Heart left ventricle (tissue), 16 donors: ENCODE measurements at regions of chr12 and their contacts with region 1.

Region 1: DNA sequence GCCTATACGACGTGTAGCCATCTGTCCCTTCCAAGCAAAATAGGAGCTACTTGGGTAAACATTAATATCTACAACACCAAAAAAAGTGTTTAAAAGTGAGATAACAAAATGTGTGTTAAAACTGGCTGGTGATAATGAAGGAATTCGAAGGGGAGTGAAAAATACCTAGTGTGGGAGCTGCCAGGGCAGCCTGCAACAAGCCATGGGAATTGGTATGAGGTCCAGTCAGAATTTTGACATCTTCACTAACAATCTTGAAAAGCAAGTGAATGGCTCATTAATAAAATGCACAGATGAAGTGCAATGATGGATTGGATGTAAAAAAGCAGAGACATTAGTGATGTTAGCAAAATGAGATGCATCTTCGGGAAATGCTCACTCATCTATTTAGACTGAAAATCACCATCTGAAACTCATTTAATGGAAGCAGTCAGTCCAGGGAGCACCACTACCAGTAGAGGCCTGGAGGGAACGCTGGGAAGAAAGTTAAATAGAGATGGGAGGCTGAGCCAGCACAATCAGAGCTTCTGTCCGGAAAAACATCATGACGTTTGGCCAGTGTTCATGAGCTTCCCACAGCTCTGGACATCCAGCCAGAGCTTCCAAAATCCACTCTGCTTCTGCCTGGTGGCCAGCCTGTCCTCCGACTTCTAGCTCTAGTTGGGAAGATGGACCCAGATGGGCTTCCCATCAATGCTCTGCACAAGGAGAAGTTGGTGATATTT is 405.0 kb upstream of the TMTC1 start:
- DNase-seq: peak in 2 of 5 donors; percentile 42 to 43
- ATAC-seq: peak; percentile 55 to 84 (median 76)
- H3K4me3 ChIP-seq: no peak overlapping the region
- H3K27ac ChIP-seq: peak overlapping the region in 4 of 12 donors; percentile 1 to 27 (median 10)
- H3K4me1 ChIP-seq: peaks cover 0 to 6% (median 0%) of the 10 kb centered on the region in 12 donors
- H3K27me3 ChIP-seq: peaks cover 0 to 4% (median 0%) of the 10 kb centered on the region in 9 donors
- CTCF ChIP-seq: no peak
- POLR2A ChIP-seq: no peak

Region 2: DNA sequence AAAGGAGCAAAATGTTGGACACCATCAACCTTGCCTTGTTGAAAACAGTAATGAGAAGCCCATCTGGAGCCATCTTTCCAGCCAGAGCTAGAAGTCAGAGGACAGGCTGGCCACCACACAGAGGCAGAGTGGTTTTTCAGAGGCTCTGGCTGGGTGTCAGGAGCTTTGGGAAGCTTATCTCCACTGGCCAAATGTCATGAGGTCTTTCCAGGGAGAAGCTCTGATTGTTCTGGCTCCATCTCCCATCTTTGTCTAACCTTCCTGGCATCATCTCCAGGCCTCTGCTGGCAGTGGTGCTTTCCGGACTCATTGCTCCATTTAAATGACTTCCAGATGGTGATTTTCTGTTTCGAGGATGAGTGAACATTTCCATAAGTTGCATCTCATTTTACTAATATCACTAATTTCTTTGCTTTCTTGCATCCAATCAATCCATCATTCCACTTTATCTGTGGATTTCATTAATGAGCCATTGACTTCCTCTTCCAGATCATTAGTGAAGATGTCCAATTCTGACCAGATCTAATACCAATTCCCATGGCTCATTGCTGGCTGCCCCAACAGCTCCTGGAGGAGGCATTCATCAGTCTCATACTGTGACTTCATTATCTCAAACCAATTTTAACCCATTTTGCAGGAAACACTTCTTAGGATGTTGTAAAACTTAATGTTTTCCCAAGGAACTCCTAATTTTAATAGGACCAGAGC is 369.7 kb before region 1 on chr12:
- intact Hi-C with region 1: loop called in 1 of 10 experiments (anchors 10 kb)
- DNase-seq: peak in 4 of 5 donors; percentile 36 to 69 (median 58)
- ATAC-seq: peak; percentile 69 to 89 (median 80)
- H3K4me3 ChIP-seq: no peak overlapping the region
- H3K27ac ChIP-seq: no peak overlapping the region
- H3K4me1 ChIP-seq: peaks cover 0 to 12% (median 1%) of the 10 kb centered on the region in 12 donors
- H3K27me3 ChIP-seq: no peaks in the 10 kb centered on the region
- CTCF ChIP-seq: no peak
- POLR2A ChIP-seq: no peak

Region 3: DNA sequence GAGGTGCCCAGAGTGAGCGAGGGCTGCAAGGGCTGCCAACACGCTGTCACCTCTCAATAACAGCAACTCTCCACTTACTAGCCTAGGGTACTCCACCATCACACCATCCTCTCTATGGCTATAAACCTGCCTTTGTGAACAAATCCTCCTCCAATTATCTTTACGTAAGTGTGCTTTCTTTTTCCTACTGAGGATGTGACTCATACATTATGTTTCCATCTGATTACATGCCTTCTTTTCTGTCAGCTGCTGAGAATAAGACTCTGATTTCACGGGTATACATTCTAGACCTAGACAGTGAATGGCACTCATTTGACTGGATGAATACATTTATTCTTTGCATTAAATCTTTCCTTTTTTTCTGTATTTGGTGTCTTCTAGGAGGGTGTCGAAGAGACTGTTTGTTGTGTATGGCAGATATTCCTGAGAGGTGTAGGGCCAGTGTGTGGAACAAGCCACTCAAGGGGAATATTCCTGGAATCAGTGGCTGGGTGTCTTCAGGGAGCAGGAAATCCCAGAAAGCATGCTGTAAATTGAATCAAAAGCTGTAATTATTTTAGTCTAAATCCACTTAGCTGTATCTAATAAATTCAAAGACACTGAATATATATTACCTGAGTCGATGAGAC is 77.7 kb before region 1 on chr12:
- intact Hi-C with region 1: no loop called
- DNase-seq: no peak
- ATAC-seq: no peak
- H3K4me3 ChIP-seq: no peak overlapping the region
- H3K27ac ChIP-seq: no peak overlapping the region
- H3K4me1 ChIP-seq: no peaks in the 10 kb centered on the region
- H3K27me3 ChIP-seq: no peaks in the 10 kb centered on the region
- CTCF ChIP-seq: no peak
- POLR2A ChIP-seq: no peak